Right lobe of liver (tissue), 6 donors: ENCODE measurements at regions of chr4 and their contacts with region 1.

Region 1: DNA sequence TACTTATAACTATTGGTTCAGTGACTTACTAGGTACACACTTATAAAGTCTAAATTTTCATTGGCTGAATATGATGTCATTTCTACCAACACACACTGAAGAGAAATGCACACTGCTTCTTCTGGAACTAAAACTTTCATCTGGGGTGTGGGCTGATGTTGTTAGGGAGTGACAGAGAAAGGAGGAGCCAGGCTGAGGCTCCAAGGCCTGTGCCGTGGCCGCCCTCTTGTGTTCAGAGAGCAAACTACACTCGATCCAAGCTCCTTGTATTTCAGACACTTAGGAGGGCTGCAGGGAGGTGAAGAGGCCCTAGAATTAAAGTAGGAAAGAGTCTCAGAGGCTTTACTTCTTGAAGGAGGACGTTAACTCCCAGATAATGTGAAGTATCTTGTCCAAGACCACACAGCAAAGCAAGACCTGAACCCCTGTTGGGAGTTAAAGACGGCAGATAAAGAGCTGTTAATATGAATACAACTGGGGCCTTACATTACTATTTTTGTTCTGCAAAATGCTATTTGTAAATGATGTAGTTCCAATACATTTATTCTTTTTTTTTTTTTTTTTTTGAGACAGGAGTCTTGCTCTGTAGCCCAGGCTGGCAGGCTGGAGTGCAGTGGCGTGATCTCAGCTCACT is 137.5 kb downstream of the AFAP1 start:
- DNase-seq: peak in 2 of 3 donors; percentile 66 to 73
- ATAC-seq: peak; percentile 83 to 90 (median 88)
- H3K4me3 ChIP-seq: no peak overlapping the region
- H3K27ac ChIP-seq: no peak overlapping the region
- H3K4me1 ChIP-seq: peaks cover 0 to 12% (median 4%) of the 10 kb centered on the region in 4 donors
- H3K27me3 ChIP-seq: no peaks in the 10 kb centered on the region
- CTCF ChIP-seq: peak; percentile 78 to 92 (median 90)
- POLR2A ChIP-seq: no peak

Region 2: GRCh38 chr4:7981738-7982394 is 179.7 kb after region 1 on chr4:
- intact Hi-C with region 1: loop called (anchors 5 kb)
- DNase-seq: peak in 1 of 3 donors; percentile 34
- ATAC-seq: no peak
- H3K4me3 ChIP-seq: no peak overlapping the region
- H3K27ac ChIP-seq: no peak overlapping the region
- H3K4me1 ChIP-seq: no peaks in the 10 kb centered on the region
- H3K27me3 ChIP-seq: no peaks in the 10 kb centered on the region
- CTCF ChIP-seq: no peak
- POLR2A ChIP-seq: no peak

Region 3: DNA sequence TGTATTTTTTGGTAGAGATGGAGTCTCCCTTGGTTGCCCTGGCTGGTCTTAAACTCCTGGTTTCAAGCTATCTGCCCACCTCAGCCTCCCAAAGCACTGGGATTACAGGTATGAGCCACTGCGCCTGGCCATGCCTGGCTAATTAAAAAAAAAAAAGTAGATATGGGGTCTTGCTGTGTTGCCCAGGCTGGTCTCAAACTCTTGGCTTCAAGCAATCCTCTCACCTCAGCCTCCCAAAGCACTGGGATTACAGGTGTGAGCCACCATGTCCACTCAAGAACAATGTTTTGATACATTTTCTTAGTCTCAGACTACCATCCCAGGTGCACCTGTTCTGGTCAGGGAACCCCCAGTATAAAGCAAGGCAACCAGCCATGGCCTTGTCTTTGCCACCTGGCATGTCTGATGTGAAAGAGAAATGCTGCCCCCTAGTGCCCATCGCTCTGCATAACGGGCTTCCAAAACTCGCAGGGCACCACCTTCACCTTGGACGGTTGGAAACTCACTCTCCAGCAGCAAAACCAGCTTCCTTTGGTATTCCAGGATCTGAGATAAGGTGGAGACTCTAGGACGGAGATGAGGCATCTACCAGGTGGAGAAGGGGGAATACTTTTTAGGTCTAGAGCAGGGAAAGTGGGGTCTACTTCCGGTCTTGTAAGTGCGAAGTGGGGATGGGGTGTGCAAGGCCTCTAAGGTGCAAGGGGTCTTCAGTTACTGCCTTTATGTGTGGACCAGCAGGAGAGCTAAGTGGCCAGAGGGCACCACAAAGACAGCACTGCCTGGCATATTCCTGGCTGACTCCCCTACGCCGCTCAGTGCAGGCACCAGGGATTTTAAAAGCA is 185.2 kb after region 1 on chr4:
- intact Hi-C with region 1: loop called (anchors 5 kb)
- DNase-seq: peak in 2 of 3 donors; percentile 63 to 73
- ATAC-seq: peak; percentile 79 to 93 (median 87)
- H3K4me3 ChIP-seq: no peak overlapping the region
- H3K27ac ChIP-seq: no peak overlapping the region
- H3K4me1 ChIP-seq: no peaks in the 10 kb centered on the region
- H3K27me3 ChIP-seq: no peaks in the 10 kb centered on the region
- CTCF ChIP-seq: peak; percentile 75 to 85 (median 84)
- POLR2A ChIP-seq: no peak